ENCODE measurements at regions of chr6 and their contacts with region 1.

Region 1: DNA sequence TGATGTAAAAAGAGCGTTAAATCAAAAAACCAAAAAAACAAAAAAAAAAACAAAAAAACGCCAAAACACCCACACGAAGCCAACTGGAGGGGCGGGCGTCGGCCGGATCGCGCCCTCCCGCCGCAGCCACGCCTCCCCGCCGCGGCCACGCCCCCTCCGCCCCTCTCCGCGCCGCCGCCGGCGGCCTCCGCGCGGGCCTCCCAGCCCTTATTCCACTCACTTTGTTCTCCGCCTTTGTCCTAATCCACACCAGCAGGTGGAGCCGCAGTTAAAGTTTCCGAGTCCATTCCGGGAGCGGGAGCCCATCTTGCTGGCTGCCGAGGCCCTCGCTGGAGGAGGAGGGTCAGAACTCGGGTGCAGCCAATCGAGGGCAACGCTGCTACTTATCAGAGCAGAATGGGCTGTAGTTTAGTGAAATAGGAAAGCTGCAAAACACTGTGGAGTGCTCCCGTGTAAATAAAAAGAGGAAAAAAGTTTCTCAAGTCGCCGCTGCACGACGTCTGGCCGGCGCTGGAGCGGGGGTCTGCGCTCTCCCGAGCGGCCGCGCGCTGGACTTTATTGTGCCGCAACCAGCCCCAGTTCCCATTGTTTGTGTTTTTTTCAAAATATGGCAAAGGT is at the start of gene ASF1A:
- DNase-seq: peak; percentile 94 to 98 (median 97)
- ATAC-seq: peak; percentile 90
- H3K4me3 ChIP-seq: peak within 1 kb of the TSS; percentile 77
- H3K4me3 Mint-ChIP-seq: peak within 1 kb of the TSS; percentile 88 to 97 (median 94)
- H3K27ac ChIP-seq: peak within 1 kb of the TSS; percentile 91
- H3K27ac Mint-ChIP-seq: peak within 1 kb of the TSS; percentile 96 to 99 (median 99)
- H3K4me1 ChIP-seq: peaks cover 47 to 52% of the 10 kb centered on the region in 2 donors
- H3K4me1 Mint-ChIP-seq: peaks cover 39 to 76% (median 69%) of the 10 kb centered on the region in 7 donors
- H3K27me3 ChIP-seq: no peaks in the 10 kb centered on the region
- H3K27me3 Mint-ChIP-seq: peaks cover 0 to 2% (median 0%) of the 10 kb centered on the region in 5 donors
- total RNA-seq, gene ASF1A: 16.5 to 63.9 (median 35.7) TPM

Region 2: GRCh38 chr6:117482240-117483003 is 1411.5 kb before region 1 on chr6 and contains the start of gene DCBLD1:
- CTCF ChIA-PET with region 1: no interaction called
- POLR2A ChIA-PET with region 1: no interaction called
- intact Hi-C with region 1: loop called in 1 of 2 experiments (anchors 5 kb)
- DNase-seq: peak in 8 of 9 donors; percentile 32 to 72 (median 36)
- ATAC-seq: peak; percentile 85
- H3K4me3 ChIP-seq: peak within 1 kb of the TSS; percentile 63
- H3K4me3 Mint-ChIP-seq: peak within 1 kb of the TSS; percentile 87 to 96 (median 91)
- H3K27ac ChIP-seq: no peak within 1 kb of the TSS
- H3K27ac Mint-ChIP-seq: peak within 1 kb of the TSS in 7 of 9 donors; percentile 28 to 84 (median 65)
- H3K4me1 ChIP-seq: peaks cover 8 to 10% of the 10 kb centered on the region in 2 donors
- H3K4me1 Mint-ChIP-seq: peaks cover 15 to 18% (median 16%) of the 10 kb centered on the region in 7 donors
- H3K27me3 ChIP-seq: no peaks in the 10 kb centered on the region
- H3K27me3 Mint-ChIP-seq: peaks cover 45 to 66% (median 53%) of the 10 kb centered on the region in 5 donors
- total RNA-seq, gene DCBLD1: 1.5 to 7.6 (median 5.6) TPM

Region 3: DNA sequence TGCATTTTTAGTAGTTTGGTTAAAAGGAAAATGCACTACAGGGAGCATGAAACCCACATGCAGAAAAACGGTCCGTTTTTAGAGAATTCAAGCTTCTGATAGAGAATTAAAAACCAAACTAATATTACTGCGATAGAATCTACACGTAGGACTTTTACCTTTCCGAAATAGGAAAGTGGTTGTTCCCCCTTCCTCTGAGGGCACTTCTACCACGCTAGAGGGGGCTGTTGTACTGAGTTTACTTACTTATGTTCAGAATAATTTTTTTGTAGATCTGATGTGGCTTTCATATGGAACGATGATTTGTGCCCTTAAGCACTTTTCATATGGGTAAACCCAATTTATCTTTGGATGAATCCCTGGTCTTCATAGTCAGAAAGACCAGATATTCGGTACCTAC is 610.1 kb before region 1 on chr6:
- CTCF ChIA-PET with region 1: no interaction called
- POLR2A ChIA-PET with region 1: no interaction called
- intact Hi-C with region 1: loop called (anchors 1 to 5 kb)
- DNase-seq: peak in 7 of 9 donors; percentile 12 to 69 (median 59)
- ATAC-seq: peak; percentile 68
- H3K4me3 ChIP-seq: no peak overlapping the region
- H3K4me3 Mint-ChIP-seq: no peak overlapping the region
- H3K27ac ChIP-seq: no peak overlapping the region
- H3K27ac Mint-ChIP-seq: peak overlapping the region in 1 of 9 donors; percentile 40
- H3K4me1 ChIP-seq: no peaks in the 10 kb centered on the region
- H3K4me1 Mint-ChIP-seq: peaks cover 0 to 7% (median 0%) of the 10 kb centered on the region in 7 donors
- H3K27me3 ChIP-seq: no peaks in the 10 kb centered on the region
- H3K27me3 Mint-ChIP-seq: peaks cover 6 to 38% (median 14%) of the 10 kb centered on the region in 5 donors

Region 4: DNA sequence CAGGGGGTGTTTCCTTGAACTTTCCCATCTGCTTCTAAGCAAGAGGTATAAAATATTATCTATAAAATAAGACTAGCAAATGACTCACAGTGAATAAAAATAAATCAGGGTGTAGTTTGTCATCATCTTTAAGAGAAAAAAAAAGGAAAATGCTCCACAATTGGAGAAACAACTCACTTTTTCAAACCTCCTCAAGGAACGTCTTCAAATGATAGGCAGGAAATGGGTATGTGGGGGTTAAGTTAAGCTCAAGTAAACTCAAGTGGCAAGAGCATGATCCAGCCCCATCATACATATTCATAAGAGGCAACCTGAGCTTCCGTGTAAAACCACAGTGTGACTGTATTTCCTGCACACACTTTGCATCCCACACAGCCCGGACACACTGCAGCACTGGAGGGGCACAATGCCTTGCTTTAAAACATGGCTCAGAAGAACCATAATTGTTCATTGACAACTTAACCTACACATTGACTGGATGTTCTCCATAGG is 184.0 kb before region 1 on chr6:
- CTCF ChIA-PET with region 1: interaction called, 3 read pairs
- POLR2A ChIA-PET with region 1: interaction called, 22 read pairs
- intact Hi-C with region 1: loop called (anchors 1 kb)
- DNase-seq: peak; percentile 25 to 87 (median 83)
- ATAC-seq: peak; percentile 93
- H3K4me3 ChIP-seq: peak overlapping the region; percentile 91
- H3K4me3 Mint-ChIP-seq: peak overlapping the region; percentile 95 to 100 (median 97)
- H3K27ac ChIP-seq: peak overlapping the region; percentile 76
- H3K27ac Mint-ChIP-seq: peak overlapping the region; percentile 94 to 99 (median 97)
- H3K4me1 ChIP-seq: peaks cover 48 to 49% of the 10 kb centered on the region in 2 donors
- H3K4me1 Mint-ChIP-seq: peaks cover 47 to 81% (median 74%) of the 10 kb centered on the region in 7 donors
- H3K27me3 ChIP-seq: no peaks in the 10 kb centered on the region
- H3K27me3 Mint-ChIP-seq: no peaks in the 10 kb centered on the region

Region 5: DNA sequence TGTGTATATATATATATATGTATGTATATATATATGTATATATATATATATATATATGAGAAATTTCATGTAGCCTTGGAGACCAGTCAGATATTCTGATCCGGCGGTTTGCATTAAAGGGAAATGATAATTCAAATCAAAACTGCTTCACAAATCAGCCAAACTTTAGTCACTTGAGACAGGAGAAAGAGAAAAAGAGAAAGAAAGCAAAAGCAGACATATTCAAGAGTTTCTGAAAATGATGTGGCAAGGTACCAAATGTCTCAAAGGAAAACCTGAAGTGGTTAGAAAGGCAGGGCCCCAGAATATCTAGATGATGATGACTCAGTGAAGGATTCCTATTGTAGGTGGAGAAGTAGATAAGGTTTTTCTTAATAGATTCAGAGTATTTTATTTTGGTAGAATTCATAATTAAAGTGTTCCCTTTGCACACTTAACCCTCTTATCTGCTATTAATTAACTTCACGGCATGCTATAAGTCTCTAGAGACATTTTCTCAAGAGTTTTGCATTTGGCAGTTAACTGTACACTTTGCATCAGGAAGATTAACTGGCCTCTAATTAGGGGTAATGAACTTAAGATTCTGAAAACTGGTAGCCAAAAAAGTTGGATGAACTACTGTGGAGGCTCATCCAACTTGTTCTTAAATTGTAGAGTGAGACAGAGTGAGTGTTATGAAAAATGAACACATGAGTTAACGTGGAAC is 50.1 kb before region 1 on chr6:
- CTCF ChIA-PET with region 1: interaction called, 5 read pairs
- POLR2A ChIA-PET with region 1: no interaction called
- intact Hi-C with region 1: loop called in 1 of 2 experiments (anchors 2 kb)
- DNase-seq: no peak
- ATAC-seq: no peak
- H3K4me3 ChIP-seq: no peak overlapping the region
- H3K4me3 Mint-ChIP-seq: peak overlapping the region in 1 of 10 donors; percentile 4
- H3K27ac ChIP-seq: no peak overlapping the region
- H3K27ac Mint-ChIP-seq: peak overlapping the region in 1 of 9 donors; percentile 24
- H3K4me1 ChIP-seq: no peaks in the 10 kb centered on the region
- H3K4me1 Mint-ChIP-seq: peaks cover 7 to 20% (median 14%) of the 10 kb centered on the region in 7 donors
- H3K27me3 ChIP-seq: no peaks in the 10 kb centered on the region
- H3K27me3 Mint-ChIP-seq: no peaks in the 10 kb centered on the region

Region 6: GRCh38 chr6:118934461-118935330 is 40.8 kb after region 1 on chr6 and contains the start of gene MCM9:
- CTCF ChIA-PET with region 1: no interaction called
- POLR2A ChIA-PET with region 1: interaction called, 55 read pairs
- intact Hi-C with region 1: loop called (anchors 1 kb)
- DNase-seq: peak; percentile 77 to 93 (median 86)
- ATAC-seq: peak; percentile 92
- H3K4me3 ChIP-seq: peak within 1 kb of the TSS; percentile 98
- H3K4me3 Mint-ChIP-seq: peak within 1 kb of the TSS; percentile 86 to 96 (median 91)
- H3K27ac ChIP-seq: peak within 1 kb of the TSS; percentile 95
- H3K27ac Mint-ChIP-seq: peak within 1 kb of the TSS; percentile 86 to 95 (median 93)
- H3K4me1 ChIP-seq: peaks cover 4 to 8% of the 10 kb centered on the region in 2 donors
- H3K4me1 Mint-ChIP-seq: peaks cover 22 to 47% (median 41%) of the 10 kb centered on the region in 7 donors
- H3K27me3 ChIP-seq: no peaks in the 10 kb centered on the region
- H3K27me3 Mint-ChIP-seq: no peaks in the 10 kb centered on the region
- total RNA-seq, gene MCM9: 21.8 to 33.7 (median 31.1) TPM

Region 7: DNA sequence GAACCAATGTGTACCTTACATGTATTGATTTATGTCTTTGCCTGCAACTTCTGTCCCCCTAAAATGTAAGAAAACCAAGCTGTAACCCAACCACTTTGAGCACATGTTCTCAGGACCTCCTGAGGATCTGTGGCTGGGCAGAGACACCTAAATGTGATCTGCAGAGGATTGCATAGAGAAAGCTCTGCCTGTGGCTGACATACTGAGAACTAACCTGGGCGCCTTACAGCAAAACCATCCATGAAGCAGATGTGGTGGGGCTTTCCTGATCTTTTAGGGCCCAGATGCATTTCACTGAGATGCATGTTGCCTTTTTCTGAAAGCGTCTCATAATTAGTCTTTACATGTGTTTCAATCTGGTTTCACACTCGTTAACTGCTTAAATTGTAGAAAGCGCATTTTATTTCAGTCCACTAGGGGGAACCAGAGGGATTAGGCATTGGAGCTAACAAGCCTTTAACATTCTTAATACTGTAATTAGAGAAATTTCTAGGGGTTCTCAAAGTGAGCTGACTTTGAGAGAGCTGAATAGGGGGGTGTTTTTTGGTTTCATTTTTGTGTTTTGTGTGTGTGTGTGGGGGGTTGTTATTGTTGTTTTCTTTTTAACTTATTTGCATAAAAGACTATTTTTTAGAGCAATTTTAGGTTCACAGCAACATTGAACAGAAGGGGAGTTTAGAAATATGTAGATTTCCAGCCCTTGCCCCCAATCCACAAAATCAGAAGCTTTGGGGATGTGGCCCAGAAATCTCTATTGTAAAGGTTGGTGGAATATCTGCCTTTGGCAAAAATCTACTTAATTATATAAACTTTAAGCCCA is 235.4 kb after region 1 on chr6:
- CTCF ChIA-PET with region 1: no interaction called
- POLR2A ChIA-PET with region 1: no interaction called
- intact Hi-C with region 1: no loop called
- DNase-seq: peak in 7 of 9 donors; percentile 18 to 63 (median 51)
- ATAC-seq: peak; percentile 80
- H3K4me3 ChIP-seq: no peak overlapping the region
- H3K4me3 Mint-ChIP-seq: peak overlapping the region in 1 of 10 donors; percentile 10
- H3K27ac ChIP-seq: no peak overlapping the region
- H3K27ac Mint-ChIP-seq: no peak overlapping the region
- H3K4me1 ChIP-seq: peaks cover 0 to 4% of the 10 kb centered on the region in 2 donors
- H3K4me1 Mint-ChIP-seq: peaks cover 0 to 8% (median 0%) of the 10 kb centered on the region in 7 donors
- H3K27me3 ChIP-seq: no peaks in the 10 kb centered on the region
- H3K27me3 Mint-ChIP-seq: peaks cover 0 to 17% (median 0%) of the 10 kb centered on the region in 5 donors

Region 8: GRCh38 chr6:119313937-119314884 is 420.3 kb after region 1 on chr6:
- CTCF ChIA-PET with region 1: no interaction called
- POLR2A ChIA-PET with region 1: no interaction called
- intact Hi-C with region 1: loop called in 1 of 2 experiments (anchors 10 kb)
- DNase-seq: peak in 7 of 9 donors; percentile 17 to 49 (median 38)
- ATAC-seq: peak; percentile 72
- H3K4me3 ChIP-seq: peak overlapping the region; percentile 22
- H3K4me3 Mint-ChIP-seq: peak overlapping the region; percentile 57 to 83 (median 73)
- H3K27ac ChIP-seq: peak overlapping the region; percentile 40
- H3K27ac Mint-ChIP-seq: peak overlapping the region; percentile 68 to 97 (median 85)
- H3K4me1 ChIP-seq: peaks cover 27 to 43% of the 10 kb centered on the region in 2 donors
- H3K4me1 Mint-ChIP-seq: peaks cover 27 to 69% (median 39%) of the 10 kb centered on the region in 7 donors
- H3K27me3 ChIP-seq: no peaks in the 10 kb centered on the region
- H3K27me3 Mint-ChIP-seq: no peaks in the 10 kb centered on the region